T-cell (primary cell): ENCODE measurements at regions of chr19 and their contacts with region 1.

Region 1: GRCh38 chr19:6737284-6738046 is at the start of gene GPR108:
- DNase-seq: peak; percentile 96 to 100 (median 99)
- ATAC-seq: peak; percentile 81 to 83 (median 82)
- H3K4me3 ChIP-seq: peak within 1 kb of the TSS; percentile 67 to 88
- H3K4me3 Mint-ChIP-seq: peak within 1 kb of the TSS; percentile 94 to 96 (median 95)
- H3K27ac ChIP-seq: peak within 1 kb of the TSS; percentile 88
- H3K27ac Mint-ChIP-seq: peak within 1 kb of the TSS; percentile 94
- H3K4me1 ChIP-seq: peaks cover 15 to 51% of the 10 kb centered on the region in 2 experiments
- H3K4me1 Mint-ChIP-seq: peaks cover 31 to 41% (median 35%) of the 10 kb centered on the region in 3 donors
- H3K27me3 ChIP-seq: peaks cover 0 to 14% of the 10 kb centered on the region in 2 experiments
- H3K27me3 Mint-ChIP-seq: no peaks in the 10 kb centered on the region
- total RNA-seq, gene GPR108: 51.8 to 83.3 (median 58.4) TPM

Region 2: DNA sequence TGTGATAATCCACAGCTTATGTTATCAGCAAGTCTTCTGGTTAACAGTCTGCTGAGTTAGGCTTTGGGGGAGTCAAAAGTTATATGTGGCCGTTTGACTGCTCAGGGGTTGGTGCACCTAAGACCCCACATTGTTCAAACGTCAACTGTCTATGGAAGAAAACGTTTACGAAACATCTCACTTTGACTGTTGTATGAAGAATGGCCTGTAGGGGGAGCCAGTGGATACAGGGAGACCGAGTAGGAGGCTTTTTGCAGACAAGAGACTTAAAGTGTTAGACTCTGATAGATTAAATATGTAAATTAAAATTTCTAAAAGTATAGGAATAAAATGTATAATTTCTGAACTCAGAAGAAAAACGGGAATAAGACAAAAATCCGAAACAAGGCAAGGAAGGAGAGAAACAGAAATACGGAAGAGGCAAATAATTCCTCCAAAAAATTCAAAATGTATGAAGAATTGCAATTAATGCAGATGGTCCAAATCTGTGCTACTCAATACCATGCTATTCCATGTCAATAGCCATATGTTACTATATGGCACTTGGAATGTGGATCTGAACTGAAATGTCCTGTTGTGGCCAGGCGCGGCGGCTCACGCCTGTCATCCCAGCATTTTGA is 105.4 kb before region 1 on chr19:
- CTCF ChIA-PET with region 1: interaction called in 1 of 2 experiments, 19 read pairs
- POLR2A ChIA-PET with region 1: no interaction called
- DNase-seq: peak; percentile 33 to 92 (median 69)
- ATAC-seq: peak; percentile 63 to 74 (median 74)
- H3K4me3 ChIP-seq: no peak overlapping the region
- H3K4me3 Mint-ChIP-seq: no peak overlapping the region
- H3K27ac ChIP-seq: no peak overlapping the region
- H3K27ac Mint-ChIP-seq: no peak overlapping the region
- H3K4me1 ChIP-seq: peaks cover 0 to 9% of the 10 kb centered on the region in 2 experiments
- H3K4me1 Mint-ChIP-seq: peaks cover 0 to 19% (median 17%) of the 10 kb centered on the region in 3 donors
- H3K27me3 ChIP-seq: no peaks in the 10 kb centered on the region
- H3K27me3 Mint-ChIP-seq: peaks cover 0 to 8% of the 10 kb centered on the region in 2 donors

Region 3: DNA sequence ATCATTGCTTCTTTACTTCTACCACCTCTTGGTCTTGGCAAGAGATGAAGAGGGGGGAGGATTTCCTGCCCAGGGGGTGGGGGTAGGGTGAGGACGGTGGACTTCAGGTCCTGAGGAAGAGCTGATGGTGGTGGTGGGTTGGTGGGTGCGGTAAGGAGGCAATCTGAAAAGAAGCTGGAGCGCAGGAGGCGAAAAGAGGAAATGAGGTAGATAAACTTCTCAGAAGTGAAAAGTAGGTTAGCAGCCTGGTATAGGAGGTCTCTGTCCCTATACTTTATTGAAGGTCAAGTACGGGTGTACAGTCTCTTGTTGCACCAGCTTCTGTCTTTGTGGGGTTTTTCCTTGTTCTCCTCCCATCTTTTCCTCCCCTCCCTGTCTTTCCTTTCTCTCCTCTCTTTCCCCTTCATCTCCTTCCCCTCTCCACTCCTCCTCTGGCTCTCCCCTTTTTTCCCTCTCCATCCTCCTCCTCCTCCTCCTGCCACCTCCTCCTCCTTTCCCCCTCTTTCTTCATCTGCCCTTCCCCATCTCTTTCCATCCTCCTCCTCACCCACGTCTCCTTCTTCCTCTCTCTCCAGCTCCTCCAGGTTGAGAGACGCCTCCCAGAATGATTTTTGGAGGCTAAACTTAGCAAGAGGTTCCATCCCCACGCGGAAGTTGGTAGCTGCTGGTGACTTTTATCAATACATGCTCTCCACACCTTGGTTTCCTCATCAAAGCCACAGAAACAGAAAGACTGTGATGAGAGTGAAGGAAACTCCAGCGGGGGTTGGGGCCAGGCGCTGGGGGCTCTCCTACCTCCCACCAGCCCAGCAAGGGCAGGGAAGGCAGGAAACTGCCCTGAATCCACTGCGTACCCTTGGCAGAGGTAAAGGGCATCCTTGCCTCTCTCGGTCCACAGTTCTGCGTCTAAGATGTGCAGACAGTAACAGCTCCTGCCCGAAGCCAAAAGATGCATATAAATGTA is 82.8 kb before region 1 on chr19:
- CTCF ChIA-PET with region 1: no interaction called
- POLR2A ChIA-PET with region 1: interaction called in 1 of 2 experiments, 14 read pairs
- DNase-seq: peak in 19 of 35 experiments; percentile 21 to 68 (median 29)
- ATAC-seq: peak; percentile 62 to 79 (median 76)
- H3K4me3 ChIP-seq: peak overlapping the region in 1 of 2 donors; percentile 36
- H3K4me3 Mint-ChIP-seq: peak overlapping the region; percentile 67 to 82 (median 75)
- H3K27ac ChIP-seq: peak overlapping the region; percentile 82
- H3K27ac Mint-ChIP-seq: peak overlapping the region; percentile 95 to 96
- H3K4me1 ChIP-seq: peaks cover 11 to 43% of the 10 kb centered on the region in 2 experiments
- H3K4me1 Mint-ChIP-seq: peaks cover 25 to 46% (median 29%) of the 10 kb centered on the region in 3 donors
- H3K27me3 ChIP-seq: no peaks in the 10 kb centered on the region
- H3K27me3 Mint-ChIP-seq: no peaks in the 10 kb centered on the region

Region 4: GRCh38 chr19:6754653-6755463 is 17.4 kb after region 1 on chr19:
- CTCF ChIA-PET with region 1: no interaction called
- POLR2A ChIA-PET with region 1: no interaction called
- DNase-seq: no peak
- ATAC-seq: no peak
- H3K4me3 ChIP-seq: no peak overlapping the region
- H3K4me3 Mint-ChIP-seq: no peak overlapping the region
- H3K27ac ChIP-seq: no peak overlapping the region
- H3K27ac Mint-ChIP-seq: peak overlapping the region in 1 of 2 donors; percentile 23
- H3K4me1 ChIP-seq: peaks cover 0 to 16% of the 10 kb centered on the region in 2 experiments
- H3K4me1 Mint-ChIP-seq: peaks cover 12 to 19% (median 12%) of the 10 kb centered on the region in 3 donors
- H3K27me3 ChIP-seq: no peaks in the 10 kb centered on the region
- H3K27me3 Mint-ChIP-seq: no peaks in the 10 kb centered on the region

Region 5: DNA sequence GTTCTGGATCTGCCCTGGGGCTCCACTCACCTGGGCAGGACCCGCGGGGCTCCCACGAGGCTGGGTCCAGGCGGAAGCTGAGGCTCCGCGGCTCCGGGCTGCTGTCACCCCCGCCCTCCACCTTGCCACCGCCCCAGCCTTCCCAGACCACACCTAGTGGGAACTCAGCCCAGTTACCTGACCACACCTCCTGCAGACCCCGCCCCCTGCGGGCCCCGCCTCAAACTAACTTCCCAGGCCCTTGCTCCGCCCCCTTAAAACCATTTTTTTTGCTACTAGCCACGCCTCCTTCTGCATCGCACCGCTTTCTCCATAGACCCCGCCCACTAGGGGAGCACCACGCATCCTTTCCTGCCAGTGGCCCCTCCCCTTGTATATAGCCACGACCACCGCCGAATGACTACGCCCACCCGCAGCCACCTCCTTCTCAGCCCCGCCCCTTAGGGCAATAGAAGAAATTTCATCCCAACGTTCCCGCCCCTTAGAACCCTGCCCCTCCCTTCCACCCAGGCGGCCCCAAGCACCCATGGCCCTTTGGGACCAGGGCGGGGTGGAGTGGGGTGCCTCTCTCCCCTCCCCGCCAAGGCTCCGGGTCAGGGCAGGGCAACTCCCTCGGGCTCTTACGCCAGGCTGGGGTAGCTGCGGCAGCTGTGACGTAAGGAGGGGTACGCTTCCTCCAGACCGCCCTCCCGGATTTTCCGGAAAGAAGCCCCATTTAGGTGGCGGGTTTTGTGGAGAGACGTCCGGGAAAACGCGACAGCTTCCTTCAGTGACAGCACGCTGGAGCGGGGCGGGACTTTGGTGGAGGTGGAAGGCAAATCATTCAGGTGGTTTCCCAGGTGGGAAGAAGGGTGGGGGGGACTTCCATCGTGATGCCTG is 30.1 kb after region 1 on chr19 and contains the start of gene SH2D3A:
- CTCF ChIA-PET with region 1: interaction called, 3 to 23 read pairs
- POLR2A ChIA-PET with region 1: interaction called in 1 of 2 experiments, 7 read pairs
- DNase-seq: peak; percentile 87 to 97 (median 92)
- ATAC-seq: peak; percentile 74 to 87 (median 82)
- H3K4me3 ChIP-seq: peak within 1 kb of the TSS; percentile 70 to 87
- H3K4me3 Mint-ChIP-seq: peak within 1 kb of the TSS; percentile 87 to 89 (median 87)
- H3K27ac ChIP-seq: peak within 1 kb of the TSS; percentile 96
- H3K27ac Mint-ChIP-seq: peak within 1 kb of the TSS; percentile 93 to 94
- H3K4me1 ChIP-seq: peaks cover 17 to 59% of the 10 kb centered on the region in 2 experiments
- H3K4me1 Mint-ChIP-seq: peaks cover 41 to 48% (median 41%) of the 10 kb centered on the region in 3 donors
- H3K27me3 ChIP-seq: no peaks in the 10 kb centered on the region
- H3K27me3 Mint-ChIP-seq: no peaks in the 10 kb centered on the region
- total RNA-seq, gene SH2D3A: 61.7 to 83.7 (median 73.6) TPM

Region 6: DNA sequence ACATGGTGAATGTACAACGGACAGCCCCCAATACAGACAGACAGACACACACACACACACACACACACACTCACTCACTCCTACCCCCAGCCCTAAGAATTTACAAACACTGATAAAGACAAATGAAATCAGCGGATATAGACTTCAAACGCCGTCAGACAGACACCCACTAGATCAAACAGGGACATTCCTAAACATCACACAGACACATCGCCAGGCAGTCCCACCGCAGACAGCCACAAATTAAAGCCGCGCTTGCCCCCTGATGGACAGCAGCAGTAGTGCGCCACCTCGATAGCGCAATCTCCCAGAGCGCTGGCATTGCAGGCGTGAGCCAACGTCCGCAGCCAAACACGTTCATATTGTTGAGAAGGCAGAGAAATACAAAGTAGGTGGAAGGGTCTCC is 125.2 kb after region 1 on chr19:
- CTCF ChIA-PET with region 1: interaction called in 1 of 2 experiments, 51 read pairs
- POLR2A ChIA-PET with region 1: interaction called in 1 of 2 experiments, 5 read pairs
- DNase-seq: peak; percentile 80 to 95 (median 87)
- ATAC-seq: peak; percentile 87 to 92 (median 90)
- H3K4me3 ChIP-seq: peak overlapping the region; percentile 41 to 62
- H3K4me3 Mint-ChIP-seq: peak overlapping the region; percentile 69 to 86 (median 85)
- H3K27ac ChIP-seq: peak overlapping the region; percentile 54
- H3K27ac Mint-ChIP-seq: peak overlapping the region; percentile 66 to 83
- H3K4me1 ChIP-seq: peaks cover 5 to 20% of the 10 kb centered on the region in 2 experiments
- H3K4me1 Mint-ChIP-seq: peaks cover 18 to 32% (median 28%) of the 10 kb centered on the region in 3 donors
- H3K27me3 ChIP-seq: no peaks in the 10 kb centered on the region
- H3K27me3 Mint-ChIP-seq: no peaks in the 10 kb centered on the region